ENCODE measurements at regions of chr18 and their contacts with region 1.

Region 1: GRCh38 chr18:3710712-3711269 is 260.8 kb downstream of the TGIF1 start:
- DNase-seq: peak in 2 of 3 donors; percentile 47 to 60
- H3K4me3 ChIP-seq: no peak overlapping the region
- H3K27ac ChIP-seq: no peak overlapping the region
- H3K4me1 ChIP-seq: peaks cover 9 to 58% (median 29%) of the 10 kb centered on the region in 4 experiments
- H3K27me3 ChIP-seq: no peaks in the 10 kb centered on the region

Region 2: GRCh38 chr18:3692113-3692621 is 18.6 kb before region 1 on chr18:
- CTCF ChIA-PET with region 1: no interaction called
- POLR2A ChIA-PET with region 1: no interaction called
- DNase-seq: no peak
- H3K4me3 ChIP-seq: no peak overlapping the region
- H3K27ac ChIP-seq: no peak overlapping the region
- H3K4me1 ChIP-seq: peaks cover 0 to 5% (median 1%) of the 10 kb centered on the region in 4 experiments
- H3K27me3 ChIP-seq: no peaks in the 10 kb centered on the region

Region 3: GRCh38 chr18:3722320-3723000 is 11.7 kb after region 1 on chr18:
- CTCF ChIA-PET with region 1: interaction called, 12 read pairs
- POLR2A ChIA-PET with region 1: interaction called, 3 read pairs
- DNase-seq: peak in 2 of 3 donors; percentile 68 to 78
- H3K4me3 ChIP-seq: no peak overlapping the region
- H3K27ac ChIP-seq: no peak overlapping the region
- H3K4me1 ChIP-seq: peaks cover 21 to 80% (median 37%) of the 10 kb centered on the region in 4 experiments
- H3K27me3 ChIP-seq: no peaks in the 10 kb centered on the region

Region 4: GRCh38 chr18:3869848-3870247 is 159.1 kb after region 1 on chr18:
- CTCF ChIA-PET with region 1: interaction called, 49 read pairs
- POLR2A ChIA-PET with region 1: no interaction called
- DNase-seq: peak; percentile 65 to 77 (median 75)
- H3K4me3 ChIP-seq: no peak overlapping the region
- H3K27ac ChIP-seq: no peak overlapping the region
- H3K4me1 ChIP-seq: peaks cover 0 to 4% (median 1%) of the 10 kb centered on the region in 4 experiments
- H3K27me3 ChIP-seq: peaks cover 0 to 2% (median 0%) of the 10 kb centered on the region in 5 experiments